Right cardiac atrium (tissue), 5 donors: ENCODE measurements at regions of chr1 and their contacts with region 1.

Region 1: GRCh38 chr1:184563308-184563707 is 176.5 kb downstream of the C1orf21 start:
- DNase-seq: no peak
- ATAC-seq: peak in 1 of 2 donors; percentile 49
- H3K4me3 ChIP-seq: no peak overlapping the region
- H3K27ac ChIP-seq: no peak overlapping the region
- H3K4me1 ChIP-seq: peaks cover 4% of the 10 kb centered on the region
- H3K27me3 ChIP-seq: no peaks in the 10 kb centered on the region

Region 2: DNA sequence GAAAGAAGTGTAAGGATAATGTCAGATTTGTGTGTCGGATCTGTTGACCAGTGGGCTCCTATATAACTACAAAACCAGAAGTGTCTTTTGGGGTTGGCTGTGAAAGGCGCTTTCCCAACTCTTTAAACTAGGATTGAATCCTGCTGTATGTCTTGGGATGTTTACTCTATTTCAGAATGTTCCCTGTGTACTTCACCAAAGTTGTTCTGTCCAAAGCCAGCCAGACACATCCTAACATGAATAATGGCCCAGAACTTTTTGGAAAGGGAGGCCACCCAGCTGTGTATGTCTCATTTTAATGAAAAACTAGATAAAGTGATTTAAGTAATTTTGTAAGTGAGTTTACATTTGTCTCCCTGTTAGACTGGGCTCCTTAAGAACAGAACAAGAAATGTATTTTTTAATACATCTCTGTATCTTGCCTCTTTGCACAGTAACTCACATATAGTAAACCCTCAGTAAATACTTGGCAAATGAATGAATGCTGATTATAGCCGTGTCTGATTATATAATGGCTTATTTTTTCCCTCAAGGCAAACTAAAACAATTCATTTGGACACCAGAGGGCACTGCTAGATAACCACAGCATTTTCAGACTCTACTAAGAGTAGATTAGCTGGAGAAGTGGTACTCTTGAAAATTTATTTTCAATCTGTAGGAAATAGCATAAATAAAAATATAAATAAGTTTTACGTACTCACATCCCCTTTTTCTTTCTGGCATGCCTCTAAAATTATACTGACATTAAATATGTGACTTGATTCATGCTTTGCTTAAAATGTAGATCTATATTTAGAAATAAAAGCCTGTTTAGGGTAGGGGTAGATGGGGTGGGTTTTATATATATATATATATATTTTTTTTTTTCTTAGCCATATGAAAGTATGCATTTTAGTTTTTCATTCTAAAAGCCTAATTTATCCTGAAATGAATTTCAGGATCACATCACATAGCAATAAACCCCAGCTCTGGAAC is 488.0 kb before region 1 on chr1:
- intact Hi-C with region 1: loop called in 3 of 4 experiments (anchors 5 to 10 kb)
- DNase-seq: no peak
- ATAC-seq: peak; percentile 81 to 84
- H3K4me3 ChIP-seq: no peak overlapping the region
- H3K27ac ChIP-seq: no peak overlapping the region
- H3K4me1 ChIP-seq: no peaks in the 10 kb centered on the region
- H3K27me3 ChIP-seq: no peaks in the 10 kb centered on the region

Region 3: DNA sequence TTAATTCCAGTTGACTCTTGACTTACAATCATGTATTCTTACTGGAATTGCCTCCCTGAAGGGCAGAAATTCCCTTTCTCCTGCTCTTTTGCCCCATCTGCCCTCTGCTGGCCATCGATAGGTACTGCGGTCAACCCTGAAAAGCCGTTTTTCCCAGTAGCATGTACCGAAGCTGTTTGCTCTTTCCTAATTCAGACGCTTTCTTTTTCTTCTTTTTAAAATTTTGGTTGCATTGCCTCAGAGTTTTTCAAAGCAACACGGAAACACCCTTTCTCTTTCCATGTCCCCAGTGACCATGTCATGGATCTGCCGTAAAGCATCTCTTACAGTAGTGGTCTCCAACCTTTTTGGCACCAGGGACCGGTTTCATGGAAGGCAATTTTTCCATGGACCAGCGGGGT is 340.7 kb before region 1 on chr1:
- intact Hi-C with region 1: loop called in 1 of 4 experiments (anchors 10 kb)
- DNase-seq: peak; percentile 37 to 72 (median 71)
- ATAC-seq: peak; percentile 58 to 60
- H3K4me3 ChIP-seq: peak overlapping the region; percentile 11
- H3K27ac ChIP-seq: no peak overlapping the region
- H3K4me1 ChIP-seq: no peaks in the 10 kb centered on the region
- H3K27me3 ChIP-seq: no peaks in the 10 kb centered on the region

Region 4: GRCh38 chr1:184242507-184242943 is 320.8 kb before region 1 on chr1:
- intact Hi-C with region 1: loop called in 1 of 4 experiments (anchors 10 kb)
- DNase-seq: no peak
- ATAC-seq: peak; percentile 84 to 91
- H3K4me3 ChIP-seq: no peak overlapping the region
- H3K27ac ChIP-seq: no peak overlapping the region
- H3K4me1 ChIP-seq: no peaks in the 10 kb centered on the region
- H3K27me3 ChIP-seq: no peaks in the 10 kb centered on the region

Region 5: GRCh38 chr1:184386312-184387068 is 176.8 kb before region 1 on chr1 and contains the start of gene C1orf21:
- intact Hi-C with region 1: loop called (anchors 5 to 10 kb)
- DNase-seq: peak; percentile 93 to 97 (median 96)
- ATAC-seq: peak; percentile 97 to 98
- H3K4me3 ChIP-seq: peak within 1 kb of the TSS; percentile 88
- H3K27ac ChIP-seq: peak within 1 kb of the TSS; percentile 95
- H3K4me1 ChIP-seq: peaks cover 2% of the 10 kb centered on the region
- H3K27me3 ChIP-seq: no peaks in the 10 kb centered on the region
- total RNA-seq, gene C1orf21: 70.4 to 93.5 (median 78.9) TPM

Region 6: DNA sequence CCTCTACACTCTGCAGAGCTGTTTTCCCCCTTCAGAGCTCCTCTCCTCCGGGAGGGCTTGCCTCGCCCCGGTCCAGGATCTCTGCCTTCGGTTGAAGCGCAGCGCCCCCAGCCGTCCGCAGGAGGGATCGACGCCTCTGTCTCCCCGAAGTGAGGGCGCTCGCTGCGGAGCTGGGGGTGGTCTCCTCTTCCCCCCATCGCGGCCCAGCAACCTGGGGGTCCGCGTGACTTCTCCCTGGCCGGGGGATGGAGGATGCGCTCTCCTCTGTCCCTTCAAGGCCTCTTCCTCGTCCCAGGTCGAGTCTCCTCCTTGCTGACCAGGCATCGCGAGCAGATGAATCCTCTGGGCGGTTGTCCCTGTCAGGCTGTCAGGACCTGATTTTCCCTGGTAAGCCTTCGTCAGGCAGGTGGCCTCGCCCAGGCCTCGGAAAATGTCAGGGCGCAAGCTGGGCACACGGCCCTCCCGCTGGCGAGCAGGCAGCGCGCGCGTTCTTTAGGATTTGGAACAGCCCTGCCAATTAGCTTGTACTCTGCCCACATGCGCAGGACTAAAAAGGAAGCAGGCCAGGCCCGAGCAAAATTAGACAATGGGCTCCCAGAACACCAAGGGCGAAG is 100.8 kb after region 1 on chr1:
- intact Hi-C with region 1: loop called in 2 of 4 experiments (anchors 10 kb)
- DNase-seq: peak; percentile 82 to 93 (median 92)
- ATAC-seq: peak; percentile 94 to 95
- H3K4me3 ChIP-seq: peak overlapping the region; percentile 24
- H3K27ac ChIP-seq: no peak overlapping the region
- H3K4me1 ChIP-seq: no peaks in the 10 kb centered on the region
- H3K27me3 ChIP-seq: no peaks in the 10 kb centered on the region